Panc1 (cell line): ENCODE measurements at regions of chr3 and their contacts with region 1.

Region 1: DNA sequence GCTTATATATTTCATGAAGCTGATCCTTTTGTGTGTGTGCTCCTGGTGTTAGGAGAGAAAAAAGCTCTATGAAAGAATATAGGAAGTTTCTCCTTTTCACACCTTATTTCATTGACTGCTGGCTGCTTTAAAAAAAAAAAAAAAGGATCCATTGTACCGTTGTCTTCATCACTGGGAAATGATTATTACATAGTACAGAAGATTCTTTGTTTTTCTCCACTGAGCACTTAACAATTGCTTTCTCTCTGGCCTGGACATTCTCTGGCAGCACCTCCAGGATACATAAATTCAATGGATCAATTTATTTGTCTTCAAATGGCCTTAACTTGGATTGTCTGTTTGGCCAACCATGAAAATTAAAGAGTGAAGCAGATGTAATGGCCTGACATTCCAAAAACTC is 37.2 kb downstream of the DPH3 start:
- DNase-seq: no peak
- ATAC-seq: no peak
- H3K4me3 ChIP-seq: no peak overlapping the region
- H3K27ac ChIP-seq: no peak overlapping the region
- H3K4me1 ChIP-seq: no peaks in the 10 kb centered on the region
- H3K27me3 ChIP-seq: no peaks in the 10 kb centered on the region
- CTCF ChIP-seq: no peak

Region 2: GRCh38 chr3:17396036-17396435 is 1168.5 kb after region 1 on chr3:
- CTCF ChIA-PET with region 1: interaction called, 13 read pairs
- POLR2A ChIA-PET with region 1: no interaction called
- in situ Hi-C with region 1: no loop called
- intact Hi-C with region 1: no loop called
- DNase-seq: no peak
- ATAC-seq: no peak
- H3K4me3 ChIP-seq: no peak overlapping the region
- H3K27ac ChIP-seq: no peak overlapping the region
- H3K4me1 ChIP-seq: no peaks in the 10 kb centered on the region
- H3K27me3 ChIP-seq: no peaks in the 10 kb centered on the region
- CTCF ChIP-seq: no peak